K562 (cell line): ENCODE measurements at regions of chr2 and their contacts with region 1.

Region 1: DNA sequence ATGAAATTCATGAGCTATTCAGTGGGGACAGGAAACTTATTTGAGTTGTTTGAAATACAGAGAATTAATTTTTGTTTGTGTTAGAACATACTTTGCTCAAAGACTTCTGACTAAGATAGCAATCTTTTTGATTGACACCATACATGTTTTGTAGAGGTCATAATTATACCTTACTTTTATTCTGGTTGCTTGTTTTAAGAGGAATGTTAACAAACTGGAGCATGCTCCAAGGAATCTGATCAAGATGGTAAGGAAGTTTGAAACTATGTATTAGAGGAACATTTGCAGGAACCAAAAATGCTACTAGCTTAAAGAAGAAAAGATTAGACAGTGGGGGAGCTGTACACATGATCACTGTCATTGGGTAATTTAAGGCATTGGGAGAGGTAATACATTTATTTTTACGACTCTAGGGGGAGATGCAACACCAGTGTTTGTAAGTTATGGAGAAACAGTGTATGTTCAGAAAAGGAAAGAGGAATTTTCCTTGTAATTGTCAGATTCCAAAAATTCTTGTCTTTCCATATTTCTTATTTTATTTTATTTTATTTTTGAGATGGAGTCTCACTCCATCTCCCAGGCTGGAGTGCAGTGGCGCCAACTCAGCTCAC is 8.0 kb downstream of the AGFG1 start:
- DNase-seq: peak; percentile 30 to 36 (median 32)
- ATAC-seq: peak; percentile 89
- H3K4me3 ChIP-seq: no peak overlapping the region
- H3K27ac ChIP-seq: no peak overlapping the region
- H3K4me1 ChIP-seq: peaks cover 2 to 3% of the 10 kb centered on the region in 2 experiments; a peak in 2 of 5 replicates
- H3K27me3 ChIP-seq: no peaks in the 10 kb centered on the region
- CTCF ChIP-seq: peak in 2 of 3 experiments; percentile 22 to 57; a peak in 3 of 6 replicates
- EP300 ChIP-seq: no peak
- POLR2A ChIP-seq: no peak
- RAD21 ChIP-seq: peak in 1 of 2 experiments; percentile 59; a peak in 3 of 4 replicates

Region 2: DNA sequence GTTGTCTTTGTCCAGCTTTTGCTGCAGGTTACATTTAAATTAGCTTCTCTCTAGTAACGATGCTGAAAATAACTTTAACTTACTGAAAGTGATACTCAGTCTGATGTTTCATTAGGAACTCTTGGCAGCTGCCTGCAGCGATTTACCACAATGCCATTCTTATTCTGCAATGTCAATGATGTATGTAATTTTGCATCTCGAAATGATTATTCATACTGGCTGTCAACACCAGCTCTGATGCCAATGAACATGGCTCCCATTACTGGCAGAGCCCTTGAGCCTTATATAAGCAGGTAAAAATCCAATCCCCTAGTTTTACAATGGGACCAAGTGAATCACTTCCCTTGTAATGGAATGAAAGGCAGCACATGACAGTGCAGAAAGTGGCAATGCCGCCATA is 171.2 kb before region 1 on chr2:
- CTCF ChIA-PET with region 1: no interaction called
- POLR2A ChIA-PET with region 1: no interaction called
- in situ Hi-C with region 1: no loop called
- intact Hi-C with region 1: no loop called
- DNase-seq: no peak
- ATAC-seq: no peak
- H3K4me3 ChIP-seq: no peak overlapping the region
- H3K27ac ChIP-seq: no peak overlapping the region
- H3K4me1 ChIP-seq: no peaks in the 10 kb centered on the region
- H3K27me3 ChIP-seq: peaks cover 0 to 3% of the 10 kb centered on the region in 2 experiments; a peak in 2 of 5 replicates
- CTCF ChIP-seq: no peak
- EP300 ChIP-seq: no peak
- POLR2A ChIP-seq: no peak
- RAD21 ChIP-seq: no peak

Region 3: DNA sequence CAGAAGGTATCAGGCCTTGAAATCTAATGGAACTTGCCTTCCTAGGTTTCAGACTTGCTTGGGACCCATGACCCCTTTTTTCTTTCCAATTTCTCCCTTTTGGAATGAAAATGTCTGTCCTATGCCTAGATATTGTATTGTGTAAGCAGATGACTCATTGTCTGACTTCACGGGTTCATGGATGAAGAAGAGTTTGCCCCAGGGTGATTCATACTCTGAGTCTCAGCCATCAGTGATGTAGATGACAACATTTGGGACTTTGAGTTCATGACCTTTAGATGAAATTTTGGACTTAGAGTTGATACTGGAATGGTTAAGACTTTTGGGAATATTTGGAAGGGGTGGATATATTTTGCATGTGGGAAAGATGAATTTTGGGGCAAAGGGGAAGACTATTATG is 175.5 kb after region 1 on chr2:
- CTCF ChIA-PET with region 1: no interaction called
- POLR2A ChIA-PET with region 1: no interaction called
- in situ Hi-C with region 1: no loop called
- intact Hi-C with region 1: loop called (anchors 5 kb)
- DNase-seq: peak in 3 of 4 experiments; percentile 2 to 6 (median 5)
- ATAC-seq: no peak
- H3K4me3 ChIP-seq: no peak overlapping the region
- H3K27ac ChIP-seq: no peak overlapping the region
- H3K4me1 ChIP-seq: no peaks in the 10 kb centered on the region
- H3K27me3 ChIP-seq: no peaks in the 10 kb centered on the region
- CTCF ChIP-seq: no peak
- EP300 ChIP-seq: no peak
- POLR2A ChIP-seq: no peak
- RAD21 ChIP-seq: no peak